ENCODE measurements at regions of chr11 and their contacts with region 1.

Region 1: GRCh38 chr11:124739479-124740276 is at the start of gene NRGN:
- DNase-seq: peak; percentile 95
- CTCF ChIP-seq: no peak

Region 2: DNA sequence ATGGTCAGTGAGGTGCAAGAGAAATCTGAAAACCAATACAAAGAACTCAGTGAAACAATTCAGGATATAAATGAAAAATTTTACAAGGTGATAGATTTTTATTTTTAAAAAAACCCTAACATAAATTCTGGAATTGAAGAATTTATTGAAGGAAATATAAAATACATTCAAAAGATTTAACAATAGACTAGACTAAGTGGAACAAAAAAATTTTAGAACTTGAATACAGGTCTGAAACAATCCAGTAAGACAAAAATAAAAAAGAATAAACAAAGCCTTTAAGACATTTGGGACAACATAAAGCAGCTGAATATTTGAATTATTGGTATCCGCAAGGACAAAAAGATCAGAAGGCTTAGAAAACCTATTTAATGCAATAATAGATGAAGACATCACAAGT is 57.2 kb before region 1 on chr11:
- CTCF ChIA-PET with region 1: no interaction called
- POLR2A ChIA-PET with region 1: no interaction called
- DNase-seq: no peak
- CTCF ChIP-seq: no peak

Region 3: GRCh38 chr11:124724979-124725718 is 14.5 kb before region 1 on chr11:
- CTCF ChIA-PET with region 1: interaction called, 12 read pairs
- POLR2A ChIA-PET with region 1: no interaction called
- DNase-seq: peak; percentile 82
- CTCF ChIP-seq: no peak

Region 4: DNA sequence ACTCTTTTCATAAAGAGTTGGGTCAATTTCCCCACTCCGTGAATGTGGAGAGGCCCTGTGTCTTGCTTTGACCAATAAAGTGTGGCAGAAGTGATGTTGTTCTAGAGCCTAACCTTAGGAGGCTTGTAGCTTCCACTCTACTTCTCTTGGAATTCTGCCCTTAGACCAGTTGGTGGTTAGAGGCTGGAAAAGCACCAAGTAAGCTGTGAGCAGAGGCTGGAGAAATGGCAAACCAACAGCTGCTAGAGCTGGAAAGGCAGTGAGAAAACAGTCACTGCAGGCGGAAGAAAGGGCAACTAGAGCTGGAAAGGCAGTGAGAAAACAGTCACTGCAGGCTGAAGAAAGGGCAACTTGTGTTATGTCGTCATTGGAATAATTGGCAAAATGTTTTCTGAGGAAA is 90.3 kb after region 1 on chr11:
- CTCF ChIA-PET with region 1: no interaction called
- POLR2A ChIA-PET with region 1: no interaction called
- DNase-seq: no peak
- CTCF ChIP-seq: no peak

Region 5: GRCh38 chr11:124891373-124891861 is 151.7 kb after region 1 on chr11:
- CTCF ChIA-PET with region 1: no interaction called
- POLR2A ChIA-PET with region 1: no interaction called
- DNase-seq: no peak
- CTCF ChIP-seq: no peak

Measured in GM10248 (cell line).